ENCODE measurements at regions of chr12 and their contacts with region 1.

Region 1: GRCh38 chr12:100348657-100349454 is 8.0 kb upstream of the SLC17A8 start:
- DNase-seq: no peak
- H3K4me3 ChIP-seq: no peak overlapping the region
- H3K27ac ChIP-seq: no peak overlapping the region
- H3K4me1 ChIP-seq: no peaks in the 10 kb centered on the region
- H3K27me3 ChIP-seq: no peaks in the 10 kb centered on the region
- CTCF ChIP-seq: peak in 3 of 4 experiments; percentile 12 to 39 (median 37)
- EP300 ChIP-seq: no peak
- POLR2A ChIP-seq: no peak

Region 2: DNA sequence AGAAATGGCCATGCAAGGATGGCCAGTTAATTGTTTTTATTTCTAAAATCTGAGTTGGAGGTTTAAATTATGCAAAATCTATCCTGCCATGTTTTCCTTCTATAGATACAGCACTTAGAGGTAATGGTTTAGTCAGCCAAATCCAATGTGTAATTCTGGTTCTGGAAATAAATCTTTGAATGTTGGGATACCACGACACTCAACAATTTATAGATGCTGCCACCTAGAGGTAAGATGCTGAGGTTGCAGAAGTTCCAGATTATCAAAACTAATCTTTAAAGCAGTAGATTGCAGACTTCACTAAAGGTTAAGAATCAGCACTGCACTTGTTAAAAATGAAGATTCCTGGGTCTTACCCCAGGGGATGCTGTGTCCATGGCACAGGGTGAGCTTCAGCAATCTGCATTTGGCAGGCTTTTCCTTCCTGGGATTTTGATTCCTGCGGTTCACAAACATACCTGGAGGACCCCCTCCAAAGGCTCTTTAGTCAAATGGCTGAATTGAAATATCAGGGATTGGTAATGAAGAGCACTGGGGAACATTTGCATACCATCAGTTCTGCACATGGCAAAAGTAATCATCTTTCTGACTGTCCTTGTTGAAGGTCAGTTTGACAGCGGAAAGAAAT is 392.3 kb after region 1 on chr12:
- intact Hi-C with region 1: loop called (anchors 5 kb)
- DNase-seq: no peak
- H3K4me3 ChIP-seq: no peak overlapping the region
- H3K27ac ChIP-seq: no peak overlapping the region
- H3K4me1 ChIP-seq: no peaks in the 10 kb centered on the region
- H3K27me3 ChIP-seq: no peaks in the 10 kb centered on the region
- CTCF ChIP-seq: peak in 2 of 4 experiments; percentile 44 to 63
- EP300 ChIP-seq: no peak
- POLR2A ChIP-seq: no peak